CD4-positive, alpha-beta T cell (primary cell): ENCODE measurements at regions of chr2 and their contacts with region 1.

Region 1: GRCh38 chr2:162301151-162301804 is 17.2 kb downstream of the IFIH1 start:
- DNase-seq: peak; percentile 14 to 83 (median 38)
- ATAC-seq: peak; percentile 87
- H3K4me3 ChIP-seq: no peak overlapping the region
- H3K4me3 Mint-ChIP-seq: no peak overlapping the region
- H3K27ac ChIP-seq: no peak overlapping the region
- H3K27ac Mint-ChIP-seq: no peak overlapping the region
- H3K4me1 ChIP-seq: no peaks in the 10 kb centered on the region
- H3K4me1 Mint-ChIP-seq: peaks cover 4% of the 10 kb centered on the region
- H3K27me3 ChIP-seq: no peaks in the 10 kb centered on the region
- H3K27me3 Mint-ChIP-seq: no peaks in the 10 kb centered on the region
- CTCF ChIP-seq: peak; percentile 94

Region 2: DNA sequence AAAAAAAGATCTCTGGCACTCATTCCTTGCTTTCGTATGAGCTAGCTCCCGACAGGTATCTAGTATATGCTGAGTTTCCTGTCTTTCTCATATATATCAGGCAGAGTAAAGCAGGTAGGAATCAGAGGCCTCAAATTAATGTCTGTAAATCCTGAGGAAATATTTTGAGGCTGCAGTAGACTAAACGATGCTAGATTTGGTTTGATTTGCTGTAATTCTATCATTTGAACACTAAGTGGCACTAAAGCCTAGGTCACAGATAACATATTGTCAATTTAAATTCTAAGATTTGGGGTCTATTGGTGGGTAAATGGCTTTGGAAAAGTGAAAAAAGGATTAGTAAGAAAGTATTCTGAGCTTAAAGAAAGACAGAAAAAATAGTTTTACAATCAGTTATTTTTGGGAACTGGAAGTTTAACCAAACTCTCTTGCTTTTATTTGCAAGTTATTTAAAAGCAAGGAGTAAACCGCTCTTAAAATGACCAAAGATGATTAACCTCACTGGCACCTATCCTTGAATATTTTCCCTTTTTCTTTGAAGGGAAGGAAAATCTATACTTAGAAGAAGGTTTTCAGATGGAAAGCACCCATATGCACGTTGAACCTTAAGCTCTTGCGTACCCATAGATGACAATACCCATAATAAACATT is 714.6 kb before region 1 on chr2:
- CTCF ChIA-PET with region 1: interaction called, 5 read pairs
- POLR2A ChIA-PET with region 1: no interaction called
- intact Hi-C with region 1: loop called (anchors 1 to 2 kb)
- DNase-seq: peak in 3 of 14 experiments; percentile 28 to 47 (median 35)
- ATAC-seq: no peak
- H3K4me3 ChIP-seq: no peak overlapping the region
- H3K4me3 Mint-ChIP-seq: no peak overlapping the region
- H3K27ac ChIP-seq: no peak overlapping the region
- H3K27ac Mint-ChIP-seq: no peak overlapping the region
- H3K4me1 ChIP-seq: no peaks in the 10 kb centered on the region
- H3K4me1 Mint-ChIP-seq: no peaks in the 10 kb centered on the region
- H3K27me3 ChIP-seq: no peaks in the 10 kb centered on the region
- H3K27me3 Mint-ChIP-seq: peaks cover 8% of the 10 kb centered on the region
- CTCF ChIP-seq: peak; percentile 71

Region 3: GRCh38 chr2:161992526-161992925 is 308.8 kb before region 1 on chr2:
- CTCF ChIA-PET with region 1: no interaction called
- POLR2A ChIA-PET with region 1: no interaction called
- intact Hi-C with region 1: loop called in 1 of 2 experiments (anchors 10 kb)
- DNase-seq: peak; percentile 18 to 83 (median 44)
- ATAC-seq: peak; percentile 75
- H3K4me3 ChIP-seq: peak overlapping the region; percentile 27
- H3K4me3 Mint-ChIP-seq: peak overlapping the region; percentile 88
- H3K27ac ChIP-seq: peak overlapping the region; percentile 65 to 78
- H3K27ac Mint-ChIP-seq: peak overlapping the region; percentile 94
- H3K4me1 ChIP-seq: peaks cover 34% of the 10 kb centered on the region
- H3K4me1 Mint-ChIP-seq: peaks cover 51% of the 10 kb centered on the region
- H3K27me3 ChIP-seq: no peaks in the 10 kb centered on the region
- H3K27me3 Mint-ChIP-seq: no peaks in the 10 kb centered on the region
- CTCF ChIP-seq: no peak

Region 4: GRCh38 chr2:162153608-162154224 is 147.6 kb before region 1 on chr2:
- CTCF ChIA-PET with region 1: no interaction called
- POLR2A ChIA-PET with region 1: no interaction called
- intact Hi-C with region 1: loop called (anchors 5 kb)
- DNase-seq: peak; percentile 21 to 76 (median 42)
- ATAC-seq: peak; percentile 91
- H3K4me3 ChIP-seq: no peak overlapping the region
- H3K4me3 Mint-ChIP-seq: peak overlapping the region; percentile 1
- H3K27ac ChIP-seq: no peak overlapping the region
- H3K27ac Mint-ChIP-seq: no peak overlapping the region
- H3K4me1 ChIP-seq: no peaks in the 10 kb centered on the region
- H3K4me1 Mint-ChIP-seq: no peaks in the 10 kb centered on the region
- H3K27me3 ChIP-seq: peaks cover 3 to 5% of the 10 kb centered on the region in 2 experiments
- H3K27me3 Mint-ChIP-seq: peaks cover 33% of the 10 kb centered on the region
- CTCF ChIP-seq: peak; percentile 80

Region 5: DNA sequence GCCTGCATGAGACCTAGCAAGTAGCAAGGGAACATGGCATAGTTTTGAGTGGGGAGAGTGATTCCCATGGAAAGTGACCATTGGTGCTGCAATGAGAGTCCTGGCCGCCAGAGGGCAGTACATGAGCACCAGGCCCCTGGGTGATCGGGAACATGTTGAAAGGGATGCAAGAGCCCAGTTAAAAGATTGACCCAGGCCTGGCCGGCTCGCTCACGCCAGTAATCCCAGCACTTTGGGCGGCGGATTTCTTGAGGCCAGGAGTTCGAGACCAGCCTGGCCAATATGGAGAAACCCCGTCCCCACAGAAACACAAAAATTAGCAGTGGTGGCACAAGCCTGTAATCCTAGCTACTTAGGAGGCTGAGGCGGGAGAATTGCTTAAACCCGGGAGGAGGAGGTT is 80.2 kb before region 1 on chr2:
- CTCF ChIA-PET with region 1: interaction called, 3 read pairs
- POLR2A ChIA-PET with region 1: no interaction called
- intact Hi-C with region 1: loop called (anchors 1 to 2 kb)
- DNase-seq: peak; percentile 7 to 67 (median 38)
- ATAC-seq: peak; percentile 66
- H3K4me3 ChIP-seq: no peak overlapping the region
- H3K4me3 Mint-ChIP-seq: no peak overlapping the region
- H3K27ac ChIP-seq: no peak overlapping the region
- H3K27ac Mint-ChIP-seq: no peak overlapping the region
- H3K4me1 ChIP-seq: no peaks in the 10 kb centered on the region
- H3K4me1 Mint-ChIP-seq: no peaks in the 10 kb centered on the region
- H3K27me3 ChIP-seq: peaks cover 2 to 9% of the 10 kb centered on the region in 2 experiments
- H3K27me3 Mint-ChIP-seq: peaks cover 30% of the 10 kb centered on the region
- CTCF ChIP-seq: peak; percentile 81

Region 6: GRCh38 chr2:162318328-162319180 is 17.3 kb after region 1 on chr2 and contains the start of gene IFIH1:
- CTCF ChIA-PET with region 1: interaction called, 23 read pairs
- POLR2A ChIA-PET with region 1: interaction called, 8 read pairs
- intact Hi-C with region 1: loop called in 1 of 2 experiments (anchors 1 kb)
- DNase-seq: peak; percentile 42 to 95 (median 63)
- ATAC-seq: peak; percentile 85
- H3K4me3 ChIP-seq: peak within 1 kb of the TSS; percentile 90
- H3K4me3 Mint-ChIP-seq: peak within 1 kb of the TSS; percentile 98
- H3K27ac ChIP-seq: peak within 1 kb of the TSS; percentile 91 to 97
- H3K27ac Mint-ChIP-seq: peak within 1 kb of the TSS; percentile 99
- H3K4me1 ChIP-seq: peaks cover 29% of the 10 kb centered on the region
- H3K4me1 Mint-ChIP-seq: peaks cover 75% of the 10 kb centered on the region
- H3K27me3 ChIP-seq: no peaks in the 10 kb centered on the region
- H3K27me3 Mint-ChIP-seq: no peaks in the 10 kb centered on the region
- CTCF ChIP-seq: no peak
- total RNA-seq, gene IFIH1: 31.1 to 32.1 TPM